ENCODE measurements at regions of chr9 and their contacts with region 1.

Region 1: DNA sequence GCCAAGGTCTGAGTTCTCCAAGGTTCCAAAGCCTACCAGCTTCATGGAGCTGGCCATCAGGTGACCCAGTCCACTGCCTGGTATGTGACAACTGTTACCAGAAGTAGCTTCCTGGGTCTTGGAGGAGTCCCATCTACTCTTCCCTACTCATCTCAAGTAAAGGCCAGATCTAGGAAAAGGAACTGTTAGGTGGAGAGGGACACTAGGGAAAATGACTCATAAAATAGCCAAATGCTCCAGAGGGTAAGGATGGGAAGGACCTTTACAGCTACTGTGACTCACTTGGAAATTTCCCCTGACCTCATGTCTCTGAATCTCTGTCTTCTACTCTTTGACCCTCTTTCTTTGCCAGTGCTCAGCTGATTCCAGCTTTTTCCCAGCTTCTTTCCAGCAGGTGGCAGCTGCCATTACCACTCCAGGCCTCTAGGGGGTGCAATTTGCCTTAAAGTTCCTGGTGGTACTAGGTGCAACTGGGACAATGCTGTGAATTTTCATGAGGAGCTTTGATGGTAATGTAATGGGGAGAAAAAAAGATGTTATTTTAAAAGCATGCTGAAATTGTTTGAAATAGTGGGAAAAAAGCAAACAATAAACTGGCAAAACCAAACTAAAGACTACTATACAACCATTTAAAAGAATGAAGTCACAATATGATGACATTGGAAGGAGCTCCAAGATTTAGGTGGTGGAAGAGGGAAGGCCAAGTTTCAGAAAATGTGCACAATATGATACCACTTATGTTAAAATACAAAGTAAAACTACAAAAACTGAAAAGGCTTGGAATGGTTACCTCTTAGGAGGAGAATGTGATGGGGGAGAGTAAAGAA is 27.1 kb upstream of the MYORG start:
- DNase-seq: peak; percentile 76
- ATAC-seq: peak; percentile 59
- H3K4me3 ChIP-seq: no peak overlapping the region
- H3K27ac ChIP-seq: no peak overlapping the region
- H3K4me1 ChIP-seq: no peaks in the 10 kb centered on the region
- H3K27me3 ChIP-seq: no peaks in the 10 kb centered on the region
- CTCF ChIP-seq: peak; percentile 95

Region 2: DNA sequence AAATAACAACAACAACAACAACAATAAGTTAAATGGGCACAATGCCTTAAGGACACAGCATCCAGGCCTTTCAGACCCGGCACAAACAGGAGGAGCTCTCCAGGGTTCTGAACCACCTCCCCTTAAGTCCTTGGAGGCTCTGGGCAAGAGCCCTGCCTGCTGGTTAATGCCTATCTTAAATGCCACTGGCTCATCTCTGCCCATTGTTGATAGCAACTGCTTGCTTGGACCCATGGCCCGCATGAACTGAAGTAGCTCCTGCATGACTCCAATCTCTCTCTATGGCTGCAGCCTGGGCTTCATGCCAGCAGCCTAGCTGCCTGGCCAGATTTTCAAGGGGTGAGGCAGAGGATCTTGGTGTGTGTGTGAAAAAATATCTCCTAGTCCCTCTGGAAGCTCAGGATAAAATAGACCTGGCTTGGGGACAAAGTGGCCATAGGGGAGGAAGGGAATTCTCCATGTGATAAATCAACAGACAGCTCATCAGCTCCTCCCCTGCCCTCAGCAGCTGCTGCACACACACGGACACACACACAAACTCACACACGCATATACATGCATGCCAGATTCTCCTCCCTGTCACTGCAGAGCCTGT is 27.2 kb after region 1 on chr9:
- CTCF ChIA-PET with region 1: interaction called, 11 read pairs
- POLR2A ChIA-PET with region 1: no interaction called
- intact Hi-C with region 1: no loop called
- DNase-seq: peak; percentile 65
- ATAC-seq: no peak; the same call in 1 of the 2 replicates
- H3K4me3 ChIP-seq: no peak overlapping the region
- H3K27ac ChIP-seq: no peak overlapping the region
- H3K4me1 ChIP-seq: no peaks in the 10 kb centered on the region
- H3K27me3 ChIP-seq: no peaks in the 10 kb centered on the region
- CTCF ChIP-seq: no peak

Region 3: GRCh38 chr9:34591248-34591916 is 187.6 kb after region 1 on chr9:
- CTCF ChIA-PET with region 1: interaction called, 15 read pairs
- POLR2A ChIA-PET with region 1: no interaction called
- intact Hi-C with region 1: loop called (anchors 2 kb)
- DNase-seq: peak; percentile 71
- ATAC-seq: peak; percentile 90
- H3K4me3 ChIP-seq: no peak overlapping the region
- H3K27ac ChIP-seq: no peak overlapping the region
- H3K4me1 ChIP-seq: no peaks in the 10 kb centered on the region
- H3K27me3 ChIP-seq: peaks cover 51% of the 10 kb centered on the region
- CTCF ChIP-seq: peak; percentile 65

Region 4: DNA sequence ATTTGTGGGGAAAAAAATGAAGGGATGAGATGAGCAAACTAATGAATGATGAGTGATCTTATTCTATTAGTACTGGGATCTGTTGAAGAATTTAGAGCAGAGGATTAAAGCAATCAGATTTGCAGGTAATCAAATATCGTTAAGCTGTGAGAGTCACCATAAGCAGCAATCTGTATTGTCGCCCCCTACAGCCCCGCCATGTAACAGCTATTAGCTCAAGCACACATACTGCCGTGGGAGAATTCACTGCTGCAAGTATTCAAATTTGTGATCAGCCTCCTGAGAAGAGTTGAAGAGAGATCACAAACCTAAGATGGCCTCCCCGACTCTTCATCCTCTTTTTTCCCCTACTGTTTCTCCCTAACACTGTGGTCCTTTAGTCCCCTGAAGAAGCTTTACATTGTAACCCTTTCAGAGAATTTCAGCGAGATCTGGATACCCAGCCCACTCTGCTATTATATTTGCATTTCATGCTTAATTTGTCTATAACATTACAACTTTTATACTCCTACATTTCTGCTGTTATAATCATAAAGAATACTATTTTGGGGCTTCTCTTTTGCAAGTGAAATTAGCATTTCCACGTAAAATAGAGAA is 525.8 kb after region 1 on chr9:
- CTCF ChIA-PET with region 1: no interaction called
- POLR2A ChIA-PET with region 1: no interaction called
- intact Hi-C with region 1: no loop called
- DNase-seq: peak; percentile 32
- ATAC-seq: no peak
- H3K4me3 ChIP-seq: no peak overlapping the region
- H3K27ac ChIP-seq: no peak overlapping the region
- H3K4me1 ChIP-seq: no peaks in the 10 kb centered on the region
- H3K27me3 ChIP-seq: peaks cover 19% of the 10 kb centered on the region
- CTCF ChIP-seq: peak; percentile 57